ENCODE measurements at regions of chr3 and their contacts with region 1.

Region 1: DNA sequence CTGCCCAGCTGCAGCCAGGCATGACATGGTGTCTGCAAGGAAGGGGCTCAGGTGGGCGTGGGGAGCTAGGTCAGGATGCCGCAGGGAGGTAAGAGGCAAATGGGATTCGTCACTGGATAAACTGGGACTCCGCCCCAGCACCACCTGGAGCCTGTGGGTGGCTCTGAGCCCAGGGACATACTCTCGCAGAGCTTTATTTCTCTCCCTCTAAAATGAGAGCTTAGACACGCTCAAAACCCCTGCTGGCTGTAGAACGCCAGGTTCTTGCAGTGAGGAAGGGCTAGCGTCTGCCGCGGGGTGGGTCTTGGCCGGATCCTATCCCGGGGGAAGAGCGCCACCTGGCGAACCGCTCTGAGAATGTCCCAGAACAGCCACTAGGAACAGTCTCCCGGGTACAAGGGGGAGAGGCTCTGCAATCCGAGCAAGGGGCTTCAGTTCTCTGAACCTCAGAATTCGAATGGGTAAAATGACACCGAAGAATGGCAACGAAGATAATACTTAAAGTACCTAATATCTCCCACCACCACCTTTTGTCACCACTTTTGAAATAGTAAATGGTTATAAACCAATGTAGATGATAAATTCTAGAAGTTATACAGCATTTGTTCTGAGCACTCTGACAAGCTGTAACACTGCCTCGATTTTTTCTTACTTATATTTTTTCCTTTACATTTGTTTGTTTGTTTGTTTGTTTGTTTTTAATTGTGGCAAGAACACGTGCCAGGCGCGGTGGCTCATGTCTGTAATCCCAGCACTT is 53.2 kb upstream of the SRGAP3 start:
- DNase-seq: peak in 1 of 2 donors; percentile 78
- H3K4me3 ChIP-seq: peak overlapping the region in 1 of 2 donors; percentile 33
- H3K27ac ChIP-seq: no peak overlapping the region
- H3K4me1 ChIP-seq: no peaks in the 10 kb centered on the region
- H3K27me3 ChIP-seq: no peaks in the 10 kb centered on the region
- CTCF ChIP-seq: peak; percentile 81 to 91 (median 87)

Region 2: GRCh38 chr3:8970971-8971589 is 331.5 kb before region 1 on chr3:
- intact Hi-C with region 1: loop called (anchors 1 kb)
- DNase-seq: peak in 1 of 2 donors; percentile 75
- H3K4me3 ChIP-seq: no peak overlapping the region
- H3K27ac ChIP-seq: no peak overlapping the region
- H3K4me1 ChIP-seq: no peaks in the 10 kb centered on the region
- H3K27me3 ChIP-seq: no peaks in the 10 kb centered on the region
- CTCF ChIP-seq: peak; percentile 90 to 98 (median 95)

Region 3: DNA sequence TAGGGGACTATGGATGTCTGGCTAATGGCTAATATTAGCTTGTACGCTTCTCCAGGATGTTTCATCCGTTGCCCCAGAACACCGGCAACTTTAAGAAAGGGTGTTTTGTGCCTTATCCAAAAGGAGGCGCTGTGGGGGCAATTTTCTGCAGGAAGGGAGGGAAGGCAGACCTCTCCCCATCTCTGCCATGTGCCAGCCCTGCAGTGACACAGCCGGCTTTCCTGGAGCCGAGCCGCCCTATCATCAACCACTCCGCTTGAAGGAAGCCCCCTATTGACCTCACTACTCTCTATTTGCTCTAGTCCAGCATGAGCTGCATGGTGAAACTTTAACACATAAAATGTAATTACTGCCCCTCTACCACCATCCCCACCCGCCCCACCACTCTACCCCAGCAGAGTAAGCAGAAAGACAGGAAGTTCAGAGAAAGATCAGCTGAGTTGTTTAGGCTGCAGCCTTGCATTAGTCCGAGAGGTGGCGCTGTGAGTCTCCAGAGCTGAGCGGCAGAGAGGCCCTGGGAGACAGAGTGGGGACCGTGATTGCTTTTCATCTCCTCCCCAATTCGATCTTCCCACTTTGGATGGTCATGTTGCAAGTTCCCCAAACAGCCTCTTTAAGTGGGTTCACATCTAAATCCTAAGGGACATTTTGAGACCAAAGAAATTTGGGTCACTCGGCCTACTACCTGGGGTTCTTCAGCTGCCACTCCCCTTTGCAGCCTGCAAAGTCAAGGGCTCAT is 314.8 kb before region 1 on chr3:
- intact Hi-C with region 1: loop called (anchors 1 kb)
- DNase-seq: peak in 1 of 2 donors; percentile 73
- H3K4me3 ChIP-seq: no peak overlapping the region
- H3K27ac ChIP-seq: no peak overlapping the region
- H3K4me1 ChIP-seq: no peaks in the 10 kb centered on the region
- H3K27me3 ChIP-seq: no peaks in the 10 kb centered on the region
- CTCF ChIP-seq: peak; percentile 48 to 77 (median 75)

Region 4: GRCh38 chr3:9078561-9079240 is 223.9 kb before region 1 on chr3:
- intact Hi-C with region 1: loop called (anchors 10 kb)
- DNase-seq: no peak
- H3K4me3 ChIP-seq: no peak overlapping the region
- H3K27ac ChIP-seq: no peak overlapping the region
- H3K4me1 ChIP-seq: peaks cover 0 to under 1% of the 10 kb centered on the region in 2 donors
- H3K27me3 ChIP-seq: no peaks in the 10 kb centered on the region
- CTCF ChIP-seq: no peak